HepG2 (cell line): ENCODE measurements at regions of chr5 and their contacts with region 1.

Region 1: GRCh38 chr5:150989695-150990094 is 30.7 kb upstream of the GPX3 start:
- DNase-seq: no peak
- ATAC-seq: peak; percentile 72
- H3K4me3 ChIP-seq: no peak overlapping the region
- H3K27ac ChIP-seq: no peak overlapping the region
- H3K4me1 ChIP-seq: peaks cover 30% of the 10 kb centered on the region
- H3K27me3 ChIP-seq: peaks cover 0 to 3% of the 10 kb centered on the region in 2 experiments; a peak in 3 of 5 replicates
- CTCF ChIP-seq: peak; percentile 62
- EP300 ChIP-seq: no peak
- POLR2A ChIP-seq: no peak
- RAD21 ChIP-seq: no peak

Region 2: DNA sequence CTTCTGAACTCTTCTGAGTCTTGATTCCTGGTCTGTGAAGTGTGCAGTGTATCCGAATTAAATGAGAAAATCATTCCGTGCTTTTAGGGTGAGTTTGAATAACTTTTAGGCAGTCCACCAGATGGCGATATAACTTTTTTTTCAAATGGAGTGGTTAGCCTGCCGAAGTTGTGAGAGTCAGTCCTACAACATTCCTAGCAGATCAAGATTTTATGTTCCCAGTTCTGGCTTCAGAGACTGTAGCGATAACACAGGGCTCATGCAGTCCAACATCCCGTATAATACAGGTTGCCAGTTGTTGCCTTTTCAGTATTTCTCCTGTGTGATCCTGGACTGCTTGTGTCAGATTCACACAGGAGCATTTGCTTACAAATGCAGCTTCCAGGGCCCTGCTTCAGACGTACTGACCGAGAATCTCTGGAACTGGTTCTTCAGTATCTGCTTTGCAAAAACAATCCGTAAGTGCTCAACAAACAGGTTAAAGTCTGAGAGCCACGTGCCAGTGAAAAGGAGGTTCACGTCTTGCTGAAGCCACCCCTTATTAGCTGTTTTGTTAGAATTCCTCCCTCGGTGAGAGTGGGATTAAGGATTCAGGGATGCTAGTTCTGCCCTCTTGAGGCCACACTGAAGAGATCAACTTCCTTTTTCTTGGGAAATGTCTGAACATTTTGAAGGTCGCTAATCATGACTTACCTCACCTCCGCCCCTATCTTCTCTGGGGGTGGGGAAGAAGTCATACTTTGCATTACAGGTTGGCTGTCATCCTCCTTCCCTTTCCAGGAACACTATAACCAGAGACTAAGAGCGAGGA is 188.4 kb before region 1 on chr5:
- CTCF ChIA-PET with region 1: interaction called, 3 read pairs
- POLR2A ChIA-PET with region 1: no interaction called
- in situ Hi-C with region 1: no loop called
- intact Hi-C with region 1: loop called (anchors 5 kb)
- DNase-seq: peak; percentile 62
- ATAC-seq: peak; percentile 95
- H3K4me3 ChIP-seq: peak overlapping the region; percentile 48 to 66 (median 65); a peak in 5 of 6 replicates
- H3K27ac ChIP-seq: no peak overlapping the region
- H3K4me1 ChIP-seq: peaks cover 14% of the 10 kb centered on the region
- H3K27me3 ChIP-seq: no peaks in the 10 kb centered on the region; a peak in 1 of 5 replicates
- CTCF ChIP-seq: peak; percentile 68
- EP300 ChIP-seq: no peak; a peak in 1 of 4 replicates
- POLR2A ChIP-seq: no peak
- RAD21 ChIP-seq: 0 out of 2 replicates have a peak, but pooled peaks have one; percentile 11

Region 3: DNA sequence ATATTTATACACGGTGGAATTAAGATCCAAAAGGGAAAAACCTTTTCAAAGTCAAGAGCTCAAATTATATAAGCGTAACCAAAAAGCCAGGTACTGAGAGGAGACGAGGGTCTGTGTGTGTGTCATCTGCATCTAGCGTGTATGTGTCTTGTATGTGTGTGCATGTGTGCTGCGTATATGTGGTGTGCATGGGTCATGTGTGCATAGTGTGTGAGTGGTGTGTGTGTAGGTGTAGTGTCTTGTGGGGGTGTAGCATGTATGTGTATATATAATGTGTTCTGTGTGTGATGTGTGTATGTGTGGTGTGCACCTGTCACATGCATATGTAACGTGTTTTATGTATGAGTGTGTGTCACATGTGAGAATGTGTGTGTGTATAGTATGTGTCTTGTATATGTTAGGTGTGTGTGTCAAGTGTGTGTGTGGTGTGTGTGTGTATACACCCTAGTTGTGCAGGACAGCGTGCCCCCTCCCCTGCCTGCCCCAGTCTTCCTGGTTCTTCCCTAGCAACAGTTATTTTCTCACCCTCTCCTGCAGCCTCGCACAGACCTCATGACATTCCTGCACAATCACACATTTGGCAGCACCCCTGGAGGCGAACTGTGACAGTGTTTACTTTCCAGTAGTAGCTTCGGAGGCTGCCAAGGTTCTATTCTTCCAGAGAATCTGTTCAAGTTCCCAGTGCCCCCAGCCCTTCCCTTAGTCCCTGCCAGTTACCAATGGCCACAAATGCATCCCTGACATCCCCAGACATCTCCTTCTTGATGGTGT is 118.2 kb after region 1 on chr5:
- CTCF ChIA-PET with region 1: no interaction called
- POLR2A ChIA-PET with region 1: no interaction called
- in situ Hi-C with region 1: no loop called
- intact Hi-C with region 1: no loop called
- DNase-seq: no peak
- ATAC-seq: no peak
- H3K4me3 ChIP-seq: no peak overlapping the region
- H3K27ac ChIP-seq: no peak overlapping the region
- H3K4me1 ChIP-seq: peaks cover 17% of the 10 kb centered on the region
- H3K27me3 ChIP-seq: no peaks in the 10 kb centered on the region
- CTCF ChIP-seq: no peak
- EP300 ChIP-seq: no peak
- POLR2A ChIP-seq: no peak
- RAD21 ChIP-seq: no peak